ENCODE measurements at regions of chr2 and their contacts with region 1.

Region 1: DNA sequence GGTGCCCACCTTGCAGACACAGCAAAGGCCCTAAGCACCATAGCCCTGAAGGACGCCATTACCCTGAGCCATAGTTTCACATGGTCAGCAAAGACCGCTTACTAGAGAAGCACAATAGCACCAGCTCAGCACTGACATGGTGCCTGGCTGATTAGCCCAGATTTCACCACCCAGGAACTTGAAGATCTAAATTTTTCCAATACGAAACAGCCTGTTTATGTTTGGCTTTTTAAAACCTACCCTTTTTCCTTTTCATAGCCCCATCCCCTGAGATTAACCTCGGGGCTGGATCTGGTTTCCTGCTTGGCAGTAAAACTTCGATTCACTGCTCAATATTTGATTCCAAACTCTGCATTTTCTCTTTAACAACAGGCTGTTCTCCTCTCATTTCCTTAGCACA is 158.5 kb upstream of the PID1 start:
- DNase-seq: no peak
- H3K4me3 ChIP-seq: no peak overlapping the region
- H3K27ac ChIP-seq: peak overlapping the region; percentile 30 to 74
- H3K4me1 ChIP-seq: no peaks in the 10 kb centered on the region
- H3K27me3 ChIP-seq: no peaks in the 10 kb centered on the region
- CTCF ChIP-seq: no peak
- POLR2A ChIP-seq: no peak

Region 2: GRCh38 chr2:229387866-229388265 is 41.7 kb before region 1 on chr2:
- intact Hi-C with region 1: loop called (anchors 2 kb)
- DNase-seq: no peak
- H3K4me3 ChIP-seq: peak overlapping the region in 1 of 3 donors; percentile 19
- H3K27ac ChIP-seq: peak overlapping the region; percentile 67 to 88
- H3K4me1 ChIP-seq: no peaks in the 10 kb centered on the region
- H3K27me3 ChIP-seq: no peaks in the 10 kb centered on the region
- CTCF ChIP-seq: no peak
- POLR2A ChIP-seq: no peak

Region 3: DNA sequence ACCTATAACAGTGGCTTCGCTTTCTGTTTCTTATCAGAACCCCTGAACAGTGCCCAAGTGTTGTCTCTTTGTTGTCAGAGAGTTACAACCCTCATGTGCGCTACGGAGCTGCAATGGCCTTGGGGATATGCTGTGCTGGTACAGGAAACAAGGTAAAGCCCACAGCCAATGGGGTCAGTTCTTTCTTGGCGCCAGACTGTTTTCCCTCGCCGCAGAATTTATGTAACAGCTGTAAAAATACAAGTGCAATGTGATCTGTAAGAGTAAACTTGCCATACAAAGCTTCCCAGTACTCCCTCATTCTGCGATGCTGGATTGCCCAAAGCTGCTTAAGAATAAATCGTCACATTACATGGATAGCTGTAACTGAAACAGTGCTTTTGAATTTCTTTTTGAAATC is 1709.1 kb after region 1 on chr2:
- intact Hi-C with region 1: no loop called
- DNase-seq: no peak
- H3K4me3 ChIP-seq: no peak overlapping the region
- H3K27ac ChIP-seq: no peak overlapping the region
- H3K4me1 ChIP-seq: no peaks in the 10 kb centered on the region
- H3K27me3 ChIP-seq: no peaks in the 10 kb centered on the region
- CTCF ChIP-seq: no peak
- POLR2A ChIP-seq: no peak